ENCODE measurements at regions of chrX and their contacts with region 1.

Region 1: GRCh38 chrX:49878834-49879659 is at the start of gene USP27X:
- DNase-seq: peak; percentile 60 to 82 (median 71)
- ATAC-seq: peak; percentile 96
- H3K4me3 ChIP-seq: peak within 1 kb of the TSS; percentile 60
- H3K4me3 Mint-ChIP-seq: peak within 1 kb of the TSS; percentile 81 to 91 (median 86)
- H3K27ac ChIP-seq: peak within 1 kb of the TSS; percentile 65
- H3K27ac Mint-ChIP-seq: peak within 1 kb of the TSS; percentile 63 to 89 (median 74)
- H3K4me1 ChIP-seq: peaks cover 10 to 19% of the 10 kb centered on the region in 2 donors
- H3K4me1 Mint-ChIP-seq: peaks cover 6 to 47% (median 36%) of the 10 kb centered on the region in 7 donors
- H3K27me3 ChIP-seq: no peaks in the 10 kb centered on the region
- H3K27me3 Mint-ChIP-seq: no peaks in the 10 kb centered on the region
- total RNA-seq, gene USP27X: 1.8 to 9.4 (median 3.8) TPM

Region 2: DNA sequence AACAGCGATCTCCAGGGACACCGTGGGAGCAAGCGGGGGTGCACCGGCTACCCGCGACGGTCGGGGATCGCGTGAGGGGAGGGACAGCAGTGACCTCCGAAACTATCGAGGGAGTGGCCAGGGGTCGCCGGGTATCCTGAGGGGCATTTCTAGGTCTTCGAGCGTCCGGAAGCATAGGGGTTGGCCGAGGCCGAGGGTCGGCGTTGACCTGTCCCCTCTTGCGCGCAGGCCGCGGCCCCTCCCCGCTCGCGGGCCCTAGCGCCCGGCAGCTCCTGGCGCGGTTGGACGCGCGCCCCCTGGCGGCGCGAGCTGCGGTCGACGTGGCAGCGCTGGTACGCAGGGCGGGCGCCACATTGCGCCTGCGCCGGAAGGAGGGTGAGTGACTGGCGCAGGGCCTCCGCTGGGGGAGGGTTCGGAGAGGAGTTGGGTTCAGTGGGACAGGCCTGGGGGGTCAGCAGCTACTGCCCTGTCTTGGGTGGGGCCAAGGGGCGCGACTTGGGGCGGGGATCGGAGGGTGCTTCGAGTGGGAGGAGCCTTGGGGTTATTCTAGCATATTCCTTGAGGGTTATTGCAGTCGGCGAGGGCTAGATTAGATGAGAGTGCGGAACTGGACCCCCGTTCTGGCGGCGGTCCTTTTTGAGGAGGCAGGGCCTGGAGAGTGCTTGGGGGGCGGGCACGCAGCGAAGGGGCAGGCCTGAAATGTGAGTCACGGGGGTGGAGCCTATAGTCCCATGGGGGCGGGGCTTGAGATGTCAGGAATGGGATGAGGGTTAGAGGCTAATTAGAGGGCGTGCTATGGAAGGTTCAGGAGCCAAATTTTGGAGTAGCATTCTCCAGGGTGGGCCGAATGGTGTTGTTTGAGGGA is 715.3 kb before region 1 on chrX:
- CTCF ChIA-PET with region 1: no interaction called
- POLR2A ChIA-PET with region 1: no interaction called
- intact Hi-C with region 1: loop called in 1 of 2 experiments (anchors 5 kb)
- DNase-seq: peak; percentile 71 to 84 (median 80)
- ATAC-seq: peak; percentile 74
- H3K4me3 ChIP-seq: peak overlapping the region; percentile 50
- H3K4me3 Mint-ChIP-seq: peak overlapping the region; percentile 72 to 84 (median 81)
- H3K27ac ChIP-seq: peak overlapping the region; percentile 74
- H3K27ac Mint-ChIP-seq: peak overlapping the region; percentile 79 to 97 (median 92)
- H3K4me1 ChIP-seq: peaks cover 14 to 16% of the 10 kb centered on the region in 2 donors
- H3K4me1 Mint-ChIP-seq: peaks cover 13 to 33% (median 26%) of the 10 kb centered on the region in 7 donors
- H3K27me3 ChIP-seq: no peaks in the 10 kb centered on the region
- H3K27me3 Mint-ChIP-seq: peaks cover 0 to under 1% (median 0%) of the 10 kb centered on the region in 5 donors

Region 3: DNA sequence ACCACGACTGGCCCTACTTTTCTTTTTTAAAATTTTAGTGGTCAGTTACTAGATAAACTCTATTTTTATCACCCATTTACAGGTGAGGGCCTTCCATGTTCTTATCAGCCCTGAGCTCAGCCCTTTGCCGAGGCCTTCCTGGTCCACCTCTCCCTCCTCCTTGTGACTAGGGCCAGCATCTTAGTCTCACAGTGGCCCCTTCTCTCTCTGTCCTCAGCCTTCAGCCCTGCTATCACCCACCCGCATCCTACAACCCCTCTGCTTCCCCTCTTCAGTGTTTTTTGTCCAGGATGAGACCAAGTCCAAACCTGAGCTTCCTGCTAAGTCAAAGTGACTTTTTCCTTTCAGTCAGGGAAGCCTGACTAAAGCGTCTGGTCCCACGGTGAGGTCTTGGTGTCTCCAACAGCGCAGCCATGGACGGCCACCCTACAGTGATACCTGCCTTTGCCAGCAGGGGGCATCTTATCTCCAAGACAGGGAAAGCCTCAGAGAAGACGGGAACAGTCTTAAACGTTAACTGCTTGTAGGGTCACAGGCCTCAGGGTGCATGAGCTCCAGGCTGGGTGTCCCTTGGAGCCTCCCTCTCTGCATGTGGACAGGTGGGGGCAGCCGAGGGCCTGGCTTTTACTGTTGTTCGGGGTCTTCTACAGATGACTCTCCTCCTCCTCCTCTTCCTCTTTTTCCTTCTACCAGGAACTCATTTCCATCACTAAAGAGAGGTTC is 587.3 kb before region 1 on chrX:
- CTCF ChIA-PET with region 1: no interaction called
- POLR2A ChIA-PET with region 1: no interaction called
- intact Hi-C with region 1: loop called in 1 of 2 experiments (anchors 1 kb)
- DNase-seq: peak; percentile 38 to 72 (median 57)
- ATAC-seq: peak; percentile 82
- H3K4me3 ChIP-seq: no peak overlapping the region
- H3K4me3 Mint-ChIP-seq: peak overlapping the region in 6 of 10 donors; percentile 7 to 77 (median 62)
- H3K27ac ChIP-seq: no peak overlapping the region
- H3K27ac Mint-ChIP-seq: peak overlapping the region in 6 of 9 donors; percentile 37 to 95 (median 82)
- H3K4me1 ChIP-seq: peaks cover 14 to 28% of the 10 kb centered on the region in 2 donors
- H3K4me1 Mint-ChIP-seq: peaks cover 9 to 48% (median 38%) of the 10 kb centered on the region in 7 donors
- H3K27me3 ChIP-seq: no peaks in the 10 kb centered on the region
- H3K27me3 Mint-ChIP-seq: peaks cover 0 to 9% (median 0%) of the 10 kb centered on the region in 5 donors

Region 4: GRCh38 chrX:49761481-49761880 is 117.6 kb before region 1 on chrX:
- CTCF ChIA-PET with region 1: interaction called, 3 read pairs
- POLR2A ChIA-PET with region 1: no interaction called
- intact Hi-C with region 1: loop called (anchors 1 kb)
- DNase-seq: peak in 6 of 9 donors; percentile 6 to 21 (median 14)
- ATAC-seq: no peak
- H3K4me3 ChIP-seq: no peak overlapping the region
- H3K4me3 Mint-ChIP-seq: no peak overlapping the region
- H3K27ac ChIP-seq: no peak overlapping the region
- H3K27ac Mint-ChIP-seq: no peak overlapping the region
- H3K4me1 ChIP-seq: no peaks in the 10 kb centered on the region
- H3K4me1 Mint-ChIP-seq: peaks cover 0 to 8% (median 1%) of the 10 kb centered on the region in 7 donors
- H3K27me3 ChIP-seq: no peaks in the 10 kb centered on the region
- H3K27me3 Mint-ChIP-seq: peaks cover 0 to 16% (median 0%) of the 10 kb centered on the region in 5 donors

Region 5: GRCh38 chrX:49922291-49923241 is 43.5 kb after region 1 on chrX and contains the start of gene CLCN5:
- CTCF ChIA-PET with region 1: interaction called, 11 read pairs
- POLR2A ChIA-PET with region 1: no interaction called
- intact Hi-C with region 1: loop called (anchors 1 kb)
- DNase-seq: peak; percentile 85 to 96 (median 94)
- ATAC-seq: peak; percentile 97
- H3K4me3 ChIP-seq: peak within 1 kb of the TSS; percentile 74
- H3K4me3 Mint-ChIP-seq: peak within 1 kb of the TSS; percentile 76 to 86 (median 83)
- H3K27ac ChIP-seq: peak within 1 kb of the TSS; percentile 61
- H3K27ac Mint-ChIP-seq: peak within 1 kb of the TSS; percentile 43 to 85 (median 57)
- H3K4me1 ChIP-seq: peaks cover 0 to 5% of the 10 kb centered on the region in 2 donors
- H3K4me1 Mint-ChIP-seq: peaks cover 0 to 16% (median 8%) of the 10 kb centered on the region in 7 donors
- H3K27me3 ChIP-seq: no peaks in the 10 kb centered on the region
- H3K27me3 Mint-ChIP-seq: no peaks in the 10 kb centered on the region
- total RNA-seq, gene CLCN5: 2.8 to 3.9 (median 3.8) TPM

Region 6: DNA sequence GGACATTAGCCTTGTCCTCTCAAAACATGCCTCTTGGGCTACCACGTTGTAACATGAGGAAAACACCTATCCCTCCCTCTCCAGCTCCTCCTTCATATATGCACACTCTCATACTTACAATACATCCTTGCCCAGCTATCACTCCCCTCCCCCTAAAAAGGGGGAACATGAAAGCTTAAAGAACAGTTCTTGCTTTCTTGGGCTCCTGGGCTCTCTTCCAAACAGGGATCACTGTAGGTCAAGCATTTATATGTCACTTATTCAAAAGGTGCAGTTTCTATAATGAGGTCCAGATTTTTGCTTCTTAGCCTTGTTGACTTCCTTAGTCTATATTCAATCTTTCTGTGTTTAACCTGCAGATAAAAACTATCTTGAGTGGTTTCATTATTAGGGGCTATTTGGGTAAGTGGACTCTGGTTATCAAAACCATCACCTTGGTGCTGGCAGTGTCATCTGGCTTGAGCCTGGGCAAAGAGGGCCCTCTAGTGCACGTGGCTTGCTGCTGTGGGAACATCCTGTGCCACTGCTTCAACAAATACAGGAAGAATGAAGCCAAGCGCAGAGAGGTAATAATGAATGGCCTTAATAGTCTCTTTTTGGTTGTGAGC is 202.3 kb after region 1 on chrX:
- CTCF ChIA-PET with region 1: no interaction called
- POLR2A ChIA-PET with region 1: no interaction called
- intact Hi-C with region 1: no loop called
- DNase-seq: no peak
- ATAC-seq: no peak
- H3K4me3 ChIP-seq: no peak overlapping the region
- H3K4me3 Mint-ChIP-seq: no peak overlapping the region
- H3K27ac ChIP-seq: no peak overlapping the region
- H3K27ac Mint-ChIP-seq: no peak overlapping the region
- H3K4me1 ChIP-seq: no peaks in the 10 kb centered on the region
- H3K4me1 Mint-ChIP-seq: peaks cover 0 to 5% (median 0%) of the 10 kb centered on the region in 7 donors
- H3K27me3 ChIP-seq: no peaks in the 10 kb centered on the region
- H3K27me3 Mint-ChIP-seq: no peaks in the 10 kb centered on the region

Region 7: DNA sequence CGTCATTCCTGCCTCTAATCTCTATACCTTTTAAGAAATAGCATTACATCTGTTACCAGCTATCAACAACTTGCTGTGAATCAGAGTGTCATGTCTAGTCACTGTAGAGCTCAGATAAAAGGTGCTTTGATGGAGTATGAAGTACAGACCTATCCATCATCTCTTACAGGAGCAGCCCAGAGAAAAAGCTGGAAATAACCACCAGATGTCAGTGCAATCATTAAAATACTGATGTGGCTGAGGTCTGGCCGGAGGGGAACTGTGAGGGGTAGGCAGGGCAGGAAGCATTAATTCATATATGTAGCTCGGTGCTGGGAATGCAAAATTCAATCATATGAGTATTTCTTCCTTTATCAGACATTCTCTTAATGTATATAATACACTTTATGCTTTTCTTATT is 221.1 kb after region 1 on chrX:
- CTCF ChIA-PET with region 1: no interaction called
- POLR2A ChIA-PET with region 1: no interaction called
- intact Hi-C with region 1: no loop called
- DNase-seq: peak in 2 of 9 donors; percentile 2
- ATAC-seq: no peak
- H3K4me3 ChIP-seq: no peak overlapping the region
- H3K4me3 Mint-ChIP-seq: no peak overlapping the region
- H3K27ac ChIP-seq: no peak overlapping the region
- H3K27ac Mint-ChIP-seq: peak overlapping the region in 1 of 9 donors; percentile 1
- H3K4me1 ChIP-seq: no peaks in the 10 kb centered on the region
- H3K4me1 Mint-ChIP-seq: peaks cover 0 to 4% (median 0%) of the 10 kb centered on the region in 7 donors
- H3K27me3 ChIP-seq: no peaks in the 10 kb centered on the region
- H3K27me3 Mint-ChIP-seq: no peaks in the 10 kb centered on the region

Region 8: GRCh38 chrX:50204364-50204899 is 325.4 kb after region 1 on chrX and contains the start of gene CCNB3:
- CTCF ChIA-PET with region 1: interaction called, 5 read pairs
- POLR2A ChIA-PET with region 1: no interaction called
- intact Hi-C with region 1: loop called in 1 of 2 experiments (anchors 1 kb)
- DNase-seq: peak; percentile 26 to 80 (median 67)
- ATAC-seq: peak; percentile 99
- H3K4me3 ChIP-seq: peak within 1 kb of the TSS; percentile 55
- H3K4me3 Mint-ChIP-seq: peak within 1 kb of the TSS; percentile 68 to 89 (median 86)
- H3K27ac ChIP-seq: peak within 1 kb of the TSS; percentile 58
- H3K27ac Mint-ChIP-seq: peak within 1 kb of the TSS; percentile 65 to 93 (median 90)
- H3K4me1 ChIP-seq: peaks cover 6 to 7% of the 10 kb centered on the region in 2 donors
- H3K4me1 Mint-ChIP-seq: peaks cover 0 to 17% (median 17%) of the 10 kb centered on the region in 7 donors
- H3K27me3 ChIP-seq: no peaks in the 10 kb centered on the region
- H3K27me3 Mint-ChIP-seq: no peaks in the 10 kb centered on the region
- total RNA-seq, gene CCNB3: 0.22 to 2.3 (median 0.31) TPM

Region 9: DNA sequence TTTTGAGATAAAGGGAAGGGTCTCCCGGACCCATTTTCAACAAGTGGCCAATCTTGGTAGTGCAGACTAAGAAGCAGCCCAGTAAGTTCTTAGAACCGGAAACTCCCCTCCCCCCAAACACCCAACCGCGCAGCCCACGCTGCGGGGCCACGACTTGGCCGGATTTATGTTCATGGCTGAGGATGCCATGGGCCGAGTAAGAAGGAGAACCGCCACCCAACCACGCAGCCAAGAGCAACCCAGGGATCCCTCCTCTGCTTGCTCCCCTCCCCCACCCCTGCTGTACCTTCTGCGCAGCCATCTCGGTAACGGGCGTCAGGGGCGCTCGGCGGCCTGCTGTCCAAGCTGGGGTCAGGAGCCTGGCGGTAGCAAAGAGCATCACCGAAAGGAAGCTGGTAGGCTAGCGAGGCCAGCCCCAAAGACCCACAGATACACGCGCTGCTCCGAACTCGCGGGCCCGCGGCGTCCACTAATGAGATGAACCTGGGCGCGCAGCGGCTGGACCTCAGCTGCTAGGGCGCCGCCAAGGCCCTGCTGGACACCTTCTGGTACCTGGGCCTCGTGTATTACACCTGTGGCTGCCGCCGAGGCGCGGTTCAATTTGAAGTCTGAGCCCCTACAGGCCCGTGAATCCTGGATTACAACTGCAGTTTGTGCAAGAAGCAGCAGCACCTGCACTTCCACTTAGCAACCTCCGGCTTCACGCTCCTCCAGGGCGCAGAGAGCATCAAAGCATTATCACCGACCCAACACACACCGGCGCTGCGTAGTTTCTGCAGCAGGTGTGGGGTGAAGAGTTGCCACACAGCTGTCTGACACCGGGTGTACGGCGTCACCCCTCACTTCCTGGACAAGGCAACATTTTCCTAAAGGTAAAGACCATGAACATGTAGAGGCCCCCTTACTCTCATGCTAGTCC is 1517.0 kb after region 1 on chrX:
- CTCF ChIA-PET with region 1: no interaction called
- POLR2A ChIA-PET with region 1: no interaction called
- intact Hi-C with region 1: loop called in 1 of 2 experiments (anchors 5 kb)
- DNase-seq: peak; percentile 24 to 80 (median 70)
- ATAC-seq: peak; percentile 94
- H3K4me3 ChIP-seq: peak overlapping the region; percentile 74
- H3K4me3 Mint-ChIP-seq: peak overlapping the region; percentile 89 to 98 (median 94)
- H3K27ac ChIP-seq: peak overlapping the region; percentile 73
- H3K27ac Mint-ChIP-seq: peak overlapping the region; percentile 89 to 99 (median 93)
- H3K4me1 ChIP-seq: no peaks in the 10 kb centered on the region
- H3K4me1 Mint-ChIP-seq: peaks cover 10 to 69% (median 61%) of the 10 kb centered on the region in 7 donors
- H3K27me3 ChIP-seq: no peaks in the 10 kb centered on the region
- H3K27me3 Mint-ChIP-seq: no peaks in the 10 kb centered on the region

Measured in naive thymus-derived CD4-positive, alpha-beta T cell (primary cell).